Natural killer cell (primary cell): ENCODE measurements at regions of chr4 and their contacts with region 1.

Region 1: GRCh38 chr4:98467627-98468072 is 190.8 kb downstream of the TSPAN5 start:
- DNase-seq: peak; percentile 30 to 85
- ATAC-seq: peak; percentile 79 to 95 (median 93)
- H3K4me3 ChIP-seq: no peak overlapping the region
- H3K4me3 Mint-ChIP-seq: peak overlapping the region; percentile 86
- H3K27ac ChIP-seq: no peak overlapping the region
- H3K27ac Mint-ChIP-seq: peak overlapping the region in 1 of 2 donors; percentile 74
- H3K4me1 ChIP-seq: peaks cover 21% of the 10 kb centered on the region
- H3K4me1 Mint-ChIP-seq: peaks cover 39% of the 10 kb centered on the region in 2 donors
- H3K27me3 ChIP-seq: no peaks in the 10 kb centered on the region
- H3K27me3 Mint-ChIP-seq: no peaks in the 10 kb centered on the region
- CTCF ChIP-seq: peak; percentile 73

Region 2: DNA sequence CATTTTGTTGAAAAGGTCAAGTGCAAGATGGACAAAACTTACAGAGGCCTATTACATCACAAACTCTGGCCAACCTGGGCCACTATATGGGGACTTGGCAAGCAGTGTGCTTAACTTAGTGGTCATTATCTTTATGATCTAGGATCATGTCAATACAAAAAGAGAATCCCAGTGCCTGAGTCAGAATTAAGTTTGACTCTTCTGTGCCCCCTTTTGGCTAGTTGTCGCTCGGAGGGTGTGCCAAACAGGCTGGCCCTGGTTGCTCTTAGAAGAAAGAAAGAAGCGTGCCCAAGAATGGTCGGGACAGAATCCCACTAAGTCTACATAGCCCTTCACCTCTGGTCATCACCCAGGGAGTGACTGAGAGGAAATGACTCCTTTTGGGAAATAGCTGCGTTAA is 361.2 kb after region 1 on chr4:
- intact Hi-C with region 1: loop called (anchors 5 kb)
- DNase-seq: peak in 1 of 2 donors; percentile 58
- ATAC-seq: peak in 2 of 3 donors; percentile 43 to 46
- H3K4me3 ChIP-seq: no peak overlapping the region
- H3K4me3 Mint-ChIP-seq: no peak overlapping the region
- H3K27ac ChIP-seq: no peak overlapping the region
- H3K27ac Mint-ChIP-seq: no peak overlapping the region
- H3K4me1 ChIP-seq: no peaks in the 10 kb centered on the region
- H3K4me1 Mint-ChIP-seq: peaks cover 0 to 10% of the 10 kb centered on the region in 2 donors
- H3K27me3 ChIP-seq: no peaks in the 10 kb centered on the region
- H3K27me3 Mint-ChIP-seq: peaks cover 0 to 13% of the 10 kb centered on the region in 2 donors
- CTCF ChIP-seq: no peak

Region 3: GRCh38 chr4:99054428-99054994 is 586.9 kb after region 1 on chr4:
- intact Hi-C with region 1: loop called (anchors 5 kb)
- DNase-seq: no peak
- ATAC-seq: no peak
- H3K4me3 ChIP-seq: no peak overlapping the region
- H3K4me3 Mint-ChIP-seq: no peak overlapping the region
- H3K27ac ChIP-seq: no peak overlapping the region
- H3K27ac Mint-ChIP-seq: peak overlapping the region in 1 of 2 donors; percentile 47
- H3K4me1 ChIP-seq: no peaks in the 10 kb centered on the region
- H3K4me1 Mint-ChIP-seq: peaks cover 9 to 18% of the 10 kb centered on the region in 2 donors
- H3K27me3 ChIP-seq: no peaks in the 10 kb centered on the region
- H3K27me3 Mint-ChIP-seq: no peaks in the 10 kb centered on the region
- CTCF ChIP-seq: no peak

Region 4: GRCh38 chr4:99205153-99205979 is 737.7 kb after region 1 on chr4:
- intact Hi-C with region 1: no loop called
- DNase-seq: no peak
- ATAC-seq: no peak
- H3K4me3 ChIP-seq: no peak overlapping the region
- H3K4me3 Mint-ChIP-seq: no peak overlapping the region
- H3K27ac ChIP-seq: no peak overlapping the region
- H3K27ac Mint-ChIP-seq: no peak overlapping the region
- H3K4me1 ChIP-seq: no peaks in the 10 kb centered on the region
- H3K4me1 Mint-ChIP-seq: no peaks in the 10 kb centered on the region
- H3K27me3 ChIP-seq: no peaks in the 10 kb centered on the region
- H3K27me3 Mint-ChIP-seq: no peaks in the 10 kb centered on the region
- CTCF ChIP-seq: no peak